Calu3 (cell line): ENCODE measurements at regions of chrX and their contacts with region 1.

Region 1: DNA sequence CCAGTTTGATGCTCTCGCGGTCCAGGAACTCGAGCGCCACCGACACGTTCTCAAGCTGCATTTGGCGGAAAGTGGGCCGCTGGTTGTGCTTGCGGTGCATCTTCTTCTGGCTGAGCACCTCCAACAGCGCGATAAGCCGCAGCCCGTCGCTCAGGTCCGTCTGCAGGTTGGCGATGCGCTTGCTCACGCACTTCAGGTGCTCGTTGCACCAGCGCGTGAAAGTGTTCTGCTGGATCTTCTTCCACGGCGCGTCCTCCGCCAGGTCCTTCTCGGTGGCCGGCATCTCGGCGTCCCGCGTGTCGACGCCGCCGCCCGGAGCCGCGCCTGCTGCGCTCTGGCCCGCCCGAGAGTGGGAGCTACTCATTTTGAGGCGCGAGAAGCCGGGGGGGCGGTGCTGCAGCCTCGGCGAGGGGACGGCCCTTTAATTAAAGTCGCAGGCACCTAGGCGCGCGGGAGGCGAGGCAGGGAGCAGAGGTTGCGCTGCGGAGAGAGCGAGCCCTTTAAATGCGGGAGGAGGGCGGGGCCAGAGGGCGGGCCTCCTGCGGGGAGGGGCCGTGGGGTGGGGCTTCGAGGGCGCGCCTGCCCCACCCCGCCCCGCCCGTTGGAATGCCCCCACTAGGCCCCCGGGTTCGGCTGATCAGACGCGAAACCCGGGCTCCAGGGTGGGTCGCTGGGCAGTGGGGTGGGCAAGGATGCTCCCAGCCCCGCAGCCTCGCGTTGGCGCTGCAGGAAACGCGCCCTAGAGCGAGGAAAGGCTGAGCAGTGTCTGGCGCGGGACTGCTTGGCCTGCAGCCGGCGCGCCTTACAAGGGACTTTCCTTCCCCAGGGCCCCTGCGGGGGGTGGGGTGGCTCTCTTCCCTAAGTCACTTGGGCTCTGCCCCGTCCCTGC is 3.3 kb downstream of the FLNA start:
- DNase-seq: peak; percentile 95
- H3K4me3 Mint-ChIP-seq: peak overlapping the region; percentile 79
- H3K27ac Mint-ChIP-seq: peak overlapping the region; percentile 66
- H3K4me1 Mint-ChIP-seq: peaks cover 9% of the 10 kb centered on the region
- H3K27me3 Mint-ChIP-seq: no peaks in the 10 kb centered on the region
- CTCF ChIP-seq: no peak

Region 2: DNA sequence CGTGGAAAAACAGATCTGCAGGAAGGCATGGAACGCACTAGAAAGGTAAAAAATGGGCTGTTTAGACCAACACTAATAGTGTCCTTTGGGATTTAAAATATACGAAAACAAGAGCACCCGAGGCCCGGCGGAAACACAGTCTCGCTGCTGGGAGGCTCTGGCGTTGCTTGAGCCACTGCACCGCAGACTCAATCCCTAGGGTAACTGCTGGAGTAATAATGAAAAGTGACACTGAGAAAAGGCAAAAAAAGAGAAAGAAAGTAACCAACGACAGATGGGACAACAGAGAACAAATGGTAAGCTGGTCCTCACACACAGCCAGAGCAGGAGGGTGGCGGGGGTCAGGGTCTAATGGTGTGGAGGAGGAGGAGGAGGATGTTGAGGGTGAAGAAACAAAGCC is 366.8 kb before region 1 on chrX:
- CTCF ChIA-PET with region 1: interaction called, 11 read pairs
- intact Hi-C with region 1: no loop called
- DNase-seq: no peak
- H3K4me3 Mint-ChIP-seq: no peak overlapping the region
- H3K27ac Mint-ChIP-seq: no peak overlapping the region
- H3K4me1 Mint-ChIP-seq: peaks cover 8% of the 10 kb centered on the region
- H3K27me3 Mint-ChIP-seq: no peaks in the 10 kb centered on the region
- CTCF ChIP-seq: no peak